Calu3 (cell line): ENCODE measurements at regions of chr18 and their contacts with region 1.

Region 1: DNA sequence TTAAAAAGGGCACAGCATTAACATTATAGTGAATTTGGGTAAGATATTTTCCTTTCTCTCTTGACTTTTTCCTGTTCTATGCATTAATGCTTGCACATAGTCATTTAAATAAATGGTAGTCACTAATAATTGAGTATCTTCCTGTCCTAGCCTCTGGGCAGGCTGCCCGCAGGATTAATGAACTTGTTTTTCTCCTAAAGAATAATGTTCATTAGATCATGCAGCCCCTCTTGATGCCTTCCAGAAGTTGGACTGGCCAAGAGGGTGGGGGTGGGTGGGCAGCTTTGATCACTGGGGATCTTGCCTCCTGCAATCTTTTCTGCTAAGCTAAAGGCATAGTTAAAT is 514.5 kb upstream of the CDH2 start:
- DNase-seq: no peak
- H3K4me3 Mint-ChIP-seq: no peak overlapping the region
- H3K27ac Mint-ChIP-seq: no peak overlapping the region
- H3K4me1 Mint-ChIP-seq: no peaks in the 10 kb centered on the region
- H3K27me3 Mint-ChIP-seq: no peaks in the 10 kb centered on the region
- CTCF ChIP-seq: no peak

Region 2: GRCh38 chr18:28606686-28607085 is 84.8 kb before region 1 on chr18:
- CTCF ChIA-PET with region 1: interaction called, 10 read pairs
- intact Hi-C with region 1: no loop called
- DNase-seq: no peak
- H3K4me3 Mint-ChIP-seq: no peak overlapping the region
- H3K27ac Mint-ChIP-seq: no peak overlapping the region
- H3K4me1 Mint-ChIP-seq: no peaks in the 10 kb centered on the region
- H3K27me3 Mint-ChIP-seq: no peaks in the 10 kb centered on the region
- CTCF ChIP-seq: no peak

Region 3: DNA sequence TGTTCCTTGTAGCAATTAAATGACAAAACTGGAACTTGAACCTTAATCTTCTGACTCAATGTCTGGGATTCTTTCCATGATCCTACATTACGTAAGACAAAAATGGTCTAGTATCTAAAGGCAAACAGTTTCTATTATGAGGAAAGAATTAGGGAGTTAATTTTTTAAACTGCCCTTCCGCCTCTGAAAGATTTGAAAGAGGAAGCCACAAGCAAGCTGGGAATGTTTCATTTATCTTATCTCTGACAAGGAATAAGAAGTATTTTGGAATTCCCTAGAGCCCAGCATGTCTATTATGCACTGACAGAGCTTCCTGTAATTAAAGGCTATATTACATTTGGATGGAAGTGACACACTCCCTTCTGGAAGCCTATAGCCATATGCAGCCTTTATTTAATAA is 44.3 kb after region 1 on chr18:
- CTCF ChIA-PET with region 1: no interaction called
- intact Hi-C with region 1: no loop called
- DNase-seq: no peak
- H3K4me3 Mint-ChIP-seq: no peak overlapping the region
- H3K27ac Mint-ChIP-seq: peak overlapping the region; percentile 45
- H3K4me1 Mint-ChIP-seq: no peaks in the 10 kb centered on the region
- H3K27me3 Mint-ChIP-seq: no peaks in the 10 kb centered on the region
- CTCF ChIP-seq: no peak